ENCODE measurements at regions of chr2 and their contacts with region 1.

Region 1: DNA sequence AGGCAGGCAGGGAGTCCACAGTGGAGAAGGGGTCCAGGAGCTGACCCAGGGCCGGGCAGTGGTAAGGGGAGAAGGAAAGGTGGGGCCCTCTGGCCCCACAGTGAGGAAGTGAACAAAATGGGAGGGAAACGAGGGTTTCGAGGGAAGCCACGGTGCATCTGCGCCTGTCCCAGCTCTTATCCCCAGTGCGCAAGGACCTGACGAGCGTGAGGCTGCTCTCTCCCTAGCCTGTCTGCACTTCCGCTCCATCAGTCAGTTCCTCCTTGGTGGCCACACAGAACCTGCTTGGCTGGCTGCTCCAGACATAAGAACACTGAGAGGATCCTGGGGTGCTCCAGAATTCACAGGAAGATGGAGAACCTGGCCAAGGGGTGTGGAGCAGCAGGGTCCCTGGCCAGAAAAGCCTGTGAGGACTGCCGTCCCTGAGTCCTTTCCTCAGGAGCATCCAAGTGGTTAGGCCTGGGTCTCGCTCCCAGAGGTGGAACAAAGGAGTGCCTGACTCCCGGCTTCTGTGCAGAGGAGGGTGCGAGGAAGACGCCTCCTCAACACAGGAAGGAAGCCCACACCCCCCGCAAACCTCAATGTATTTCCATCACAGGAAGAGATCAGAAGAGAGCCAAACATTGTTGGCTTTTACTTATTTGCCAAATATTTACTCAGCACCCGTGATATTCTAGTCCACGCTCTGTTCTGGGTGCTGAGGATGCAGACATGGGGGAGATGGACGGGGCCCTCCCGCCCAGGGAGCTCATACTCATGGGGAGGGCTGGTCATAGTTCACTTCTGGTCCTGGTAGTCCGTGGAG is 43.7 kb upstream of the SEMA4C start:
- DNase-seq: peak in 8 of 9 experiments; percentile 46 to 81 (median 65)
- ATAC-seq: peak; percentile 78
- H3K4me3 ChIP-seq: peak overlapping the region; percentile 40 to 42
- H3K4me3 Mint-ChIP-seq: peak overlapping the region; percentile 82
- H3K27ac ChIP-seq: peak overlapping the region; percentile 32 to 75
- H3K27ac Mint-ChIP-seq: peak overlapping the region; percentile 94
- H3K4me1 ChIP-seq: peaks cover 53% of the 10 kb centered on the region
- H3K4me1 Mint-ChIP-seq: peaks cover 75% of the 10 kb centered on the region
- H3K27me3 ChIP-seq: no peaks in the 10 kb centered on the region
- H3K27me3 Mint-ChIP-seq: no peaks in the 10 kb centered on the region
- CTCF ChIP-seq: no peak

Region 2: GRCh38 chr2:96927405-96928243 is 14.0 kb after region 1 on chr2:
- CTCF ChIA-PET with region 1: interaction called, 5 read pairs
- POLR2A ChIA-PET with region 1: interaction called, 20 read pairs
- intact Hi-C with region 1: loop called in 1 of 2 experiments (anchors 1 kb)
- DNase-seq: no peak
- ATAC-seq: no peak
- H3K4me3 ChIP-seq: no peak overlapping the region
- H3K4me3 Mint-ChIP-seq: no peak overlapping the region
- H3K27ac ChIP-seq: no peak overlapping the region
- H3K27ac Mint-ChIP-seq: no peak overlapping the region
- H3K4me1 ChIP-seq: peaks cover 23% of the 10 kb centered on the region
- H3K4me1 Mint-ChIP-seq: peaks cover 27% of the 10 kb centered on the region
- H3K27me3 ChIP-seq: no peaks in the 10 kb centered on the region
- H3K27me3 Mint-ChIP-seq: no peaks in the 10 kb centered on the region
- CTCF ChIP-seq: no peak

Measured in CD8-positive, alpha-beta T cell (primary cell).